Gastrocnemius medialis (tissue), 4 donors: ENCODE measurements at regions of chr19 and their contacts with region 1.

Region 1: GRCh38 chr19:2168619-2169424 is 5.1 kb downstream of the DOT1L start:
- DNase-seq: peak; percentile 99 to 100
- ATAC-seq: peak; percentile 84 to 88
- H3K4me3 ChIP-seq: peak overlapping the region in 2 of 4 donors; percentile 1 to 22
- H3K27ac ChIP-seq: peak overlapping the region; percentile 91 to 100 (median 96)
- H3K4me1 ChIP-seq: peaks cover 75 to 81% of the 10 kb centered on the region in 2 donors
- H3K27me3 ChIP-seq: no peaks in the 10 kb centered on the region
- CTCF ChIP-seq: no peak
- POLR2A ChIP-seq: peak; percentile 57 to 76

Region 2: GRCh38 chr19:2096480-2097329 is 72.1 kb before region 1 on chr19 and contains the start of gene IZUMO4:
- in situ Hi-C with region 1: no loop called
- intact Hi-C with region 1: loop called (anchors 1 kb)
- DNase-seq: peak; percentile 97 to 98
- ATAC-seq: peak; percentile 86 to 87
- H3K4me3 ChIP-seq: peak within 1 kb of the TSS; percentile 82 to 91 (median 87)
- H3K27ac ChIP-seq: peak within 1 kb of the TSS; percentile 86 to 99 (median 92)
- H3K4me1 ChIP-seq: peaks cover 38 to 39% of the 10 kb centered on the region in 2 donors
- H3K27me3 ChIP-seq: no peaks in the 10 kb centered on the region
- CTCF ChIP-seq: peak; percentile 13 to 56 (median 28)
- POLR2A ChIP-seq: peak; percentile 37 to 40
- total RNA-seq, gene IZUMO4: 0.93 to 1.4 TPM in 2 of 4 donors, not detected in the others

Region 3: DNA sequence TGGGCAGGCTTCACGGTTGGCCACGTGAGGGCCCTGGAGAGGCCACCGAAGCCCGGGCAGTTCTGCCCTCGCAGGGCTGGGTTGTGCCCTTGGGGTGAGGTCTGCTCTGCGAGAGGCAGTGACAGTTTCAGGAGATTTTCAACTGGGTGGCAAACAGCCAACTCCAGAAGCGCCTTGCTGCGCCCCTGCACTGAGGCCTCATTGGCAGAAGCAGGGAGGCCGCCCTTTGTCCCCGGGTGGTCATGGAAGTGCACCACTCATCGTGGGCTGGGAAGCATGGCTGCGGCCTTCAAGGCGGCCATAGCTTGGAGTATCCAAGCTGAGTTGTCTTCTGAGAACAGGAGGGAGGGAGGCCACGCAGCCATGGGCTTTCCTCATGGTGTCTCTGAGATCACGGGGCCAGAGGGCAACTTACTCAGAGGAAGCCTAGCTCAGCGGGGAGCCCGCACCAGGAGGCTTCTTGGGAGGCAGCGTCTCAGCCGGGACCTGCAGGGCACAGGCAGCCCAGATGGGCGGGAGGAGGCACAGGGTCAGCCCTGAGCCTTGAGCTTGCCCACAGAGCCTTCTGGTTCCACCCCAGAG is 52.5 kb after region 1 on chr19:
- in situ Hi-C with region 1: no loop called
- intact Hi-C with region 1: no loop called
- DNase-seq: no peak
- ATAC-seq: no peak
- H3K4me3 ChIP-seq: no peak overlapping the region
- H3K27ac ChIP-seq: no peak overlapping the region
- H3K4me1 ChIP-seq: no peaks in the 10 kb centered on the region
- H3K27me3 ChIP-seq: no peaks in the 10 kb centered on the region
- CTCF ChIP-seq: no peak
- POLR2A ChIP-seq: no peak

Region 4: DNA sequence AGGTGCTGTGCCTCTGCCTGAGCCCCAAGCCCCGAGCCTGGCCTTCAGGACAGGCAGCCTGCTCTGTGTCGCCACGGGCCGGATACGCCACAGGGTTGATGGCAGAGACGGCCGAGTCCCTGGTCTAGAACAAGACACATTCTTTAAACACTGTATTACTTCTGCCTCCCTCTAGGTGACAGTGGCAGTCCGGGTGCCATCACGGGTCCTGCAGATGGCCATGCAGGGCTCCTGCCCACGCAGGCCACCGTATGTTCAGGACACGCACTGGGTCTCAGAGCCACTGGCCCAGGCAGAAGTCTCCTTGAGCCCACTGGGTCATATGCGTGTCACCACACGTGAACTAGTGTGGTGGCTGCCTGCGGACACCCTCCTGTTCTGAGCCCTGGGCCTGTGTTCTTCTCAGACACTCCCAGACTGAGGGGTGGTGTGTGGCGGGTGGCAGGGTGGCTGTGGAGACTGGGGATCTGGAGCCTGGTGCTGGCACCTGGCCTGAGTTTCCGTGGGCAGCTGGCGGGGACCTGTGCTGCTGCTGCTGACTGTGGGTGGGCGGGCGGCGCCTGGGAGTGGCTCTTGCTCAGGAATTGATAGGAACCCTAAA is 62.9 kb after region 1 on chr19:
- in situ Hi-C with region 1: no loop called
- intact Hi-C with region 1: no loop called
- DNase-seq: peak in 1 of 2 donors; percentile 52
- ATAC-seq: no peak
- H3K4me3 ChIP-seq: no peak overlapping the region
- H3K27ac ChIP-seq: peak overlapping the region; percentile 63 to 82 (median 74)
- H3K4me1 ChIP-seq: peaks cover 25 to 43% of the 10 kb centered on the region in 2 donors
- H3K27me3 ChIP-seq: no peaks in the 10 kb centered on the region
- CTCF ChIP-seq: peak in 3 of 5 experiments; percentile 13 to 46 (median 36)
- POLR2A ChIP-seq: no peak

Region 5: GRCh38 chr19:3970808-3971598 is 1802.2 kb after region 1 on chr19 and contains the start of gene DAPK3:
- in situ Hi-C with region 1: no loop called
- intact Hi-C with region 1: loop called (anchors 10 kb)
- DNase-seq: peak; percentile 98
- ATAC-seq: peak; percentile 74 to 78
- H3K4me3 ChIP-seq: peak within 1 kb of the TSS; percentile 79 to 98 (median 90)
- H3K27ac ChIP-seq: peak within 1 kb of the TSS; percentile 97 to 100 (median 98)
- H3K4me1 ChIP-seq: peaks cover 42 to 43% of the 10 kb centered on the region in 2 donors
- H3K27me3 ChIP-seq: no peaks in the 10 kb centered on the region
- CTCF ChIP-seq: peak in 3 of 5 experiments; percentile 20 to 42 (median 26)
- POLR2A ChIP-seq: peak; percentile 100
- total RNA-seq, gene DAPK3: 61.3 to 135 (median 115) TPM